Panc1 (cell line): ENCODE measurements at regions of chr9 and their contacts with region 1.

Region 1: GRCh38 chr9:78130004-78130403 is 98.4 kb upstream of the GNAQ start:
- DNase-seq: no peak
- ATAC-seq: no peak
- H3K4me3 ChIP-seq: no peak overlapping the region
- H3K27ac ChIP-seq: no peak overlapping the region
- H3K4me1 ChIP-seq: 0 out of 2 replicates have a peak, but pooled peaks cover 4% of the 10 kb centered on the region
- H3K27me3 ChIP-seq: no peaks in the 10 kb centered on the region
- CTCF ChIP-seq: peak; percentile 33

Region 2: DNA sequence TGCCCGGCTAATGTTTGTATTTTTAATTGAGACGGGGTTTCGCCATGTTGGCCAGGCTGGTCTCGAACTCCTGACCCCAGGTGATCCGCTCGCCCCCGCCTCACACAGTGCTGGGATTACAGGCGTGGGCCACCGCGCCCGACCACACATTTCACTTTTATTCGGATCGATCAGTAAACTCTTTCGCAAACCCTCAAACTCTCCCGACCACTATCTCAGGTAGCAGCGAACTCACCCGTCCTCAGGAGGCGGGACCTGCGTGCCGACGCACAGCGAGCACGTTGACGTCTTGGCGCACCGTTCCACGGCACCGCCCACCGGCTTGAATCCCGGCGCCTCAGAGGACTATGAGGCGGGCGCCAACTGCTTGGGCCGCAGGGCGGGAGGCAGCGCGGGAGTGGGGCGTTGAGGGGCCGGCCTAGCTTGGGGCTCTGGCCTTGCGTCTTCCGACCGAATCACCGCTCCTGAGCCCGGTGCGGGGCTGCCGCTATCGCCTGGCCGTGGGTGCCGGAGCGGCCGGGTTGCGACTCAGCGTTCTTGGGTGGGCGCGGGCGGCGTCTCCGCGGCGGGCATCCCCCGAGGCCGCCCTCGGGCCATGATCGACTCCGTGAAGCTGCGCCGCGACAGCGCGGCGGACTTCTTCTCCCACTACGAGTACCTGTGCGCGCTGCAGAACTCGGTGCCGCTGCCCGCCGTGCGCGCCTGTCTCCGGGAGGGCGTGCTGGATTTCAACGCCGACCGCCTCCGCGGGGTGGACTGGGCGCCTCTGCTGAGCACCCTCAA is 105.9 kb after region 1 on chr9 and contains the start of gene CEP78:
- CTCF ChIA-PET with region 1: no interaction called
- POLR2A ChIA-PET with region 1: no interaction called
- in situ Hi-C with region 1: no loop called
- intact Hi-C with region 1: loop called (anchors 5 kb)
- DNase-seq: peak; percentile 22
- ATAC-seq: peak; percentile 99
- H3K4me3 ChIP-seq: peak within 1 kb of the TSS; percentile 78 to 85
- H3K27ac ChIP-seq: peak within 1 kb of the TSS; percentile 77
- H3K4me1 ChIP-seq: peaks cover 2% of the 10 kb centered on the region; the same call in 1 of the 2 replicates
- H3K27me3 ChIP-seq: no peaks in the 10 kb centered on the region
- CTCF ChIP-seq: no peak
- total RNA-seq, gene CEP78: 25.2 TPM